Prostate gland (tissue), 2 donors: ENCODE measurements at regions of chr19 and their contacts with region 1.

Region 1: DNA sequence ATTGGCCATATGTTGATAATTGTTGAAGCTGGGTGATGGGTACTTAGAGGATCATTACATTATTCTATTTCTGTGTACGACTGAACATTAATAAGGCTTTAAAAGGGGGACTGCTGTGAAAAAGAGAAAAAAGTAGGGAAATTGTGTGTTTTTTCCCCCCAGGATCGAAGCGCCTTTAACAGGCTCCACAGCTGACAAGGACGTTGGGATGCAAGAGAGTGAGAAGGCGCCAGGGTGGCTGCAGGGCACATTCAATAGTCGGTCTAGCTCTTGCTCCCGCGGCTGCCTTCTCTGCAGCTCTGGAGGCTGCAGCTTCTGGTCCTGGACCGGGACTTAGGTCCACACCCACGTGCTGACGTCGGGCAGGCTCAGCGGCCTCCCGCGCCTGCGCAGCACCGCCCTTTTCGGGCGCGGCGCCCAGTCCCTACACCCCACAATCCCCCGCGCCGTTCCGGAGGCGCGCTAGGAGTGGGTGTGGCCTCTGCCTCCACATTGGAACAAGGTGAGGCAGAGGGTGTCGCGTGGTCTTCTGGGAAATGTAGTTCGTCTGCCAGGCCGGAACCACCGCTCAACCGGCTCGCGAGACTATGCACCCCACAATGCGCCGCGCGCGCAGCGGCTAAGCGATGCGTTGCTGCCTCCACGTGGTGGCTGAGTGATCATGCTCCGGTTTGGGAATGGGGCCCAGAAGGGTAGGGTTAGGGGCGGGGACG is 4.9 kb upstream of the LRFN3 start:
- DNase-seq: peak; percentile 99
- H3K4me3 ChIP-seq: peak overlapping the region in 1 of 2 donors; percentile 20
- H3K27ac ChIP-seq: peak overlapping the region; percentile 70 to 71
- H3K4me1 ChIP-seq: no peaks in the 10 kb centered on the region
- H3K27me3 ChIP-seq: no peaks in the 10 kb centered on the region
- CTCF ChIP-seq: peak; percentile 87 to 99 (median 92)
- POLR2A ChIP-seq: peak; percentile 89

Region 2: DNA sequence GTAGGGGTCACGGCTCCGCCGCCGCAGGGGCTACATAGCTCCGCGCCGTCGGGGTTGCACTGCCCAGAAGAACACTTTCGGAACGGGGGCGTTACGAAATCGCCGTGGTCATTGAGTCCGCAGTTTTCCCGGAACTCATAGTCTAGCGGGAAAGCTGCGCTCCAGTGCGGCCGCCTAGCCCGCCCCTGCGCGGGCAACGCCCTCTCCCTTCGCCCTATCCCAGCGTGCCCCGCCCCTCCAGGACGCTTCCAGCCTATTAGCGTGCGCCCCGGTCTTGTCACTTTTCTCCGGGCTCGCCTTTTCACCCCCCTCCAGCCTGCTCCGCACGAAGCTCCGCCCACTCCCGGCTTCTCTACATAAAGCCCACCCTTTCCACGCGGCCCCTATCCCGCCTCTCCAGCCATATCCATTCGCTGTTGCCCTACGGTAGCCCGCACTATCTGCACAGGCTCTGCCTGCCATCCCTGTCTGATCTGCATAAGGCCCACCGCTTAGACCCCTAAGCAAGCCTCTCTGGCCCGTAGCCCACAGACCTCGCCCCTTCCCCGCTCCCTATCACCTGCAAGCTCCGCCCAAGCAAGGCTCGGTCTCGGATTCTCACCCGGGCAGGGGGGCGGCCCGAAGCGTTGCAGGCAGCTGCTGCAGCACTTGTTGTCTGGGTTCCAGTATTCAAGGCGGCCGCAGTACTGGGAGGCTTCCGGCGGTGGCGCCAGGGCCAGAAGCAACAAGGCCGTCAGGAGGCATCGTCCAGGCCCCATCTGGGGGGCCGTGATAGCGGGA is 190.7 kb before region 1 on chr19:
- intact Hi-C with region 1: loop called (anchors 5 kb)
- DNase-seq: peak; percentile 97
- H3K4me3 ChIP-seq: peak overlapping the region; percentile 39 to 54
- H3K27ac ChIP-seq: peak overlapping the region; percentile 68 to 72
- H3K4me1 ChIP-seq: peaks cover 3% of the 10 kb centered on the region
- H3K27me3 ChIP-seq: no peaks in the 10 kb centered on the region
- CTCF ChIP-seq: no peak
- POLR2A ChIP-seq: peak; percentile 19

Region 3: GRCh38 chr19:35757749-35758608 is 173.3 kb before region 1 on chr19 and contains the start of gene PROSER3:
- intact Hi-C with region 1: loop called (anchors 5 kb)
- DNase-seq: peak; percentile 99
- H3K4me3 ChIP-seq: peak within 1 kb of the TSS; percentile 69 to 97
- H3K27ac ChIP-seq: peak within 1 kb of the TSS; percentile 88 to 93
- H3K4me1 ChIP-seq: peaks cover 6% of the 10 kb centered on the region
- H3K27me3 ChIP-seq: no peaks in the 10 kb centered on the region
- CTCF ChIP-seq: peak in 1 of 4 experiments; percentile 18
- POLR2A ChIP-seq: peak; percentile 72
- total RNA-seq, gene PROSER3: 13.6 to 19.2 TPM

Region 4: GRCh38 chr19:35768082-35768421 is 163.3 kb before region 1 on chr19:
- intact Hi-C with region 1: no loop called
- DNase-seq: no peak
- H3K4me3 ChIP-seq: no peak overlapping the region
- H3K27ac ChIP-seq: no peak overlapping the region
- H3K4me1 ChIP-seq: no peaks in the 10 kb centered on the region
- H3K27me3 ChIP-seq: no peaks in the 10 kb centered on the region
- CTCF ChIP-seq: no peak
- POLR2A ChIP-seq: no peak

Region 5: DNA sequence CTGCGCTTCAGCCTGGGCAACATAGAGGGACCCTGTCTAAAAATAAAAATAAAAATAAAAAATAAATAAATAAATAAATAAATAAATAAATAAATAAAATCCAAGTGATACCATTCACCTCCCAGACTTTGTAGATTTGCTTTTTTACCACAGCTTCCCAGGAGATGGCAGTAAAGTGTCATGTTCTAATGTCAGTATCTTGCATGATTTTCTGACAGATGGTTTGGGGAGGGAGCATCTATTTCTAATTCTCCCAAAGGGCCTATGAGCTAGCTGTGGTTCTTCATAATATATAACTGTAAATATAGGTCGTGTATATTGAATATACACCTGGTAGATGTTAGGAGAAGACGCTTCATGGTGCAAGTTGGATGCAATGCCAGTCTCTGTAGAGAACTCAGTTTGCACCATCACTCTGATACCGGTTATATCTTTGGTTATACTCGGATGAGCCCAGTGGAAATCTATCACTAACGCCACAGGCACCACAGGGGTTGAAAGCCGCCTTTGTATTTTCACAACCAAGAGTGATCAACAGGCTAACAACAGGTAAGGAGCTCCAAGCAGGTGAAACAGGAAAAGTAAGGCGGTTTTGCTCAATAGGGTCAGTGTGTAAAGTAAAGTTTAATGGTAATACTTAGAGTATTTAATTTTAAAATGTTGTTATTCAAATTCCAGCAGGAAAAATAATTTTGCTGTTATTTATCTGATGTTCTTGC is 49.0 kb before region 1 on chr19:
- intact Hi-C with region 1: loop called (anchors 1 kb)
- DNase-seq: peak; percentile 42
- H3K4me3 ChIP-seq: no peak overlapping the region
- H3K27ac ChIP-seq: no peak overlapping the region
- H3K4me1 ChIP-seq: no peaks in the 10 kb centered on the region
- H3K27me3 ChIP-seq: no peaks in the 10 kb centered on the region
- CTCF ChIP-seq: peak in 3 of 4 experiments; percentile 32 to 75 (median 42)
- POLR2A ChIP-seq: no peak

Region 6: GRCh38 chr19:35899547-35900214 is 31.6 kb before region 1 on chr19:
- intact Hi-C with region 1: loop called (anchors 1 kb)
- DNase-seq: peak; percentile 75
- H3K4me3 ChIP-seq: peak overlapping the region; percentile 50
- H3K27ac ChIP-seq: peak overlapping the region; percentile 79 to 87
- H3K4me1 ChIP-seq: no peaks in the 10 kb centered on the region
- H3K27me3 ChIP-seq: no peaks in the 10 kb centered on the region
- CTCF ChIP-seq: no peak
- POLR2A ChIP-seq: peak; percentile 69